ENCODE measurements at regions of chr1 and their contacts with region 1.

Region 1: GRCh38 chr1:15975805-15976680 is at the start of gene ZBTB17:
- DNase-seq: peak; percentile 96
- ATAC-seq: peak; percentile 90
- H3K4me3 Mint-ChIP-seq: peak within 1 kb of the TSS; percentile 89
- H3K27ac Mint-ChIP-seq: peak within 1 kb of the TSS; percentile 85
- H3K4me1 Mint-ChIP-seq: peaks cover 12% of the 10 kb centered on the region
- H3K27me3 Mint-ChIP-seq: no peaks in the 10 kb centered on the region; the same call in 1 of the 2 replicates
- CTCF ChIP-seq: no peak
- total RNA-seq, gene ZBTB17: 27.6 to 32.0 TPM (median 27.9 TPM) in 3 replicates

Region 2: DNA sequence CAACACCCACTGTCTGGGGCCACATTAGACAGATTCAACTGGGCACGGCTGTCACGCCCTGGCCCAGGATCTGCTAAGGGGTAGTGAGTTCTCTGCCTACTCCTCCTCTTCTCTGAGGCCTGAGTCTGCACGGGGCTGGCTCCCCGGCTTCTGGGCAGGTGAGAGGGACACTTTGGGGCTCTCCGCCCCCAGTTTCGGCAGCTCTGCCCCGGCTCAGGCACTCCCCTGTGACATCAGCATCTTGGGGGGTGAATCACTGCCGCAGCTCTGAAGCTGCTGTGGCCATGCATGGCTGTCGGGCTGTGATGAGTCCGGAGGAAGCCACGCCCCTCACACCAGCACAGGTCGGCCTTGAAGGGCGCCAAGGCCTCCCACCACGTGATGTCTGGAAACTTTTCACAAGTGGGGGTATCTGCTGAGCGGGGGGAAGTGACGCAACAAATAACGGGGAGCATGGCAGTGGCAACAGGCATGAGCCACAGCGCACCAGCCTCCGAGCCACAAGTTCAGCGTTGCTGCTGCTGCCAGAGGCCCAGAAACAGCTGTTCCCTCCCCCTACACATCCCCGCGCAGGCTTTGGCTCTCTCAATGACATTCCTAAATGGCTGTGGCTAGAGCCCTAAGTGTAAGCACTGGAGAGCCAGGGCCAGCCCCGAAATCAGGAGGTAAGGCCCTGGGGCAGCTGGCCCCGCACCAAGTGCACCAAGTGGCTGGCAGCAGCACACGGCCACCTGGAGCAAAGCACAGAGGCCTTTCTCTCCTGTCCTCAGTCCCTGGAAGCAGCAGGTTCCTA is 26.4 kb before region 1 on chr1:
- CTCF ChIA-PET with region 1: interaction called, 19 read pairs
- POLR2A ChIA-PET with region 1: no interaction called
- DNase-seq: peak; percentile 55
- ATAC-seq: peak; percentile 52
- H3K4me3 Mint-ChIP-seq: no peak overlapping the region
- H3K27ac Mint-ChIP-seq: peak overlapping the region; percentile 87
- H3K4me1 Mint-ChIP-seq: peaks cover 63% of the 10 kb centered on the region
- H3K27me3 Mint-ChIP-seq: no peaks in the 10 kb centered on the region
- CTCF ChIP-seq: no peak

Region 3: GRCh38 chr1:15957228-15958095 is 18.6 kb before region 1 on chr1:
- CTCF ChIA-PET with region 1: interaction called, 17 read pairs
- POLR2A ChIA-PET with region 1: no interaction called
- DNase-seq: peak; percentile 72
- ATAC-seq: peak; percentile 79
- H3K4me3 Mint-ChIP-seq: no peak overlapping the region
- H3K27ac Mint-ChIP-seq: peak overlapping the region; percentile 5; the same call in 1 of the 2 replicates
- H3K4me1 Mint-ChIP-seq: peaks cover 57% of the 10 kb centered on the region
- H3K27me3 Mint-ChIP-seq: no peaks in the 10 kb centered on the region
- CTCF ChIP-seq: peak; percentile 63

Measured in WTC11 (cell line).